Activated T-helper 1 cell treated with anti-CD3 and anti-CD28 coated beads, Interleukin-12 subunit alpha, Interleukin-12 subunit beta, Interleukin-2, Interleukin-4 antibody, amounts not matched to agents 30 ng/mL and 10 ng/mL and 1 ng/mL, durations not matched to agents 14 hours and 24 hours and 36 hours (primary cell): ENCODE measurements at regions of chr7 and their contacts with region 1.

Region 1: DNA sequence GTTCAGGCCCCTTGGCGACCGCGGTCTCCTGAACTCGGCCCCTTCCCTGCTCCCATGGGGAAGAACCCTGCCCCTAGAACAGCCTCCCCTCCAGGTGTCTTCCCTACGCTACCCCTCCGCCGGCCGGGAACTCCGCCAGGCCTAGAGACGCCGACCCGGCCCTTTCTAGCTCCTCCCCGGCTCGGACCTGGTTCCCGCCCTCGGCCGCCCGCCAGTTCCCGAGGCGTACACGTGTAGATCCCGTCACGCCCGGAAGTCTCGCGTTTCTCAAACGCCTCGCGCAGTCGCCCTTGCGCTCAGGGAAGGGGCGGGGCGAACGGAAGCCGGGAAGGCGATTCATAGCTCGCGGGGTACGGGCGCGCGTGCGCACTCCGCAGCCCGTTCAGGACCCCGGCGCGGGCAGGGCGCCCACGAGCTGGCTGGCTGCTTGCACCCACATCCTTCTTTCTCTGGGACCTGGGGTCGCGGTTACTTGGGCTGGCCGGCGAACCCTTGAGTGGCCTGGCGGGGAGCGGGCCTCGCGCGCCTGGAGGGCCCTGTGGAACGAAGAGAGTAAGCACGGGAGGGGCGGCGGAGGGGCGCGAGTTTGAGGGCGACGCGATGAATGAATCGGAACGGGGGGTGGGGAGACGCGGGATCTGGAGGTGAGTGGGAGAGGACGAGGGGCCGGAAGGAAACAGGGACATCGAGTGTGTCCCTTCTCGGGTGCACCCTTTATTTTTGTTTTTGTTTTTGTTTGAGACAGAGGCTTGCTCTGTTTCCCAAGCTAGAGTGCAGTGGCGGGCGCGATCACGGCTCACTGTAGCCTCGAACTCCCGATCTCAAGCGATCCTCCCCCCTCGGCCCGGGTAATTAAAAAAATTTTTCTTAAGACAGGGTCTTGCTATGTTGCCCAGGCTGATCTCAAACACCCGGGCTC is at the start of gene POP7:
- DNase-seq: peak; percentile 99
- H3K4me3 Mint-ChIP-seq: peak within 1 kb of the TSS; percentile 98
- H3K27ac Mint-ChIP-seq: peak within 1 kb of the TSS; percentile 98
- H3K4me1 Mint-ChIP-seq: peaks cover 7% of the 10 kb centered on the region
- H3K27me3 Mint-ChIP-seq: peaks cover 13% of the 10 kb centered on the region
- total RNA-seq, gene POP7: 82.7 and 84.4 TPM in 2 replicates

Region 2: GRCh38 chr7:100632951-100633717 is 72.9 kb before region 1 on chr7:
- intact Hi-C with region 1: loop called (anchors 5 kb)
- DNase-seq: peak; percentile 57
- H3K4me3 Mint-ChIP-seq: peak overlapping the region; percentile 92
- H3K27ac Mint-ChIP-seq: peak overlapping the region; percentile 92
- H3K4me1 Mint-ChIP-seq: peaks cover 21% of the 10 kb centered on the region
- H3K27me3 Mint-ChIP-seq: no peaks in the 10 kb centered on the region

Region 3: DNA sequence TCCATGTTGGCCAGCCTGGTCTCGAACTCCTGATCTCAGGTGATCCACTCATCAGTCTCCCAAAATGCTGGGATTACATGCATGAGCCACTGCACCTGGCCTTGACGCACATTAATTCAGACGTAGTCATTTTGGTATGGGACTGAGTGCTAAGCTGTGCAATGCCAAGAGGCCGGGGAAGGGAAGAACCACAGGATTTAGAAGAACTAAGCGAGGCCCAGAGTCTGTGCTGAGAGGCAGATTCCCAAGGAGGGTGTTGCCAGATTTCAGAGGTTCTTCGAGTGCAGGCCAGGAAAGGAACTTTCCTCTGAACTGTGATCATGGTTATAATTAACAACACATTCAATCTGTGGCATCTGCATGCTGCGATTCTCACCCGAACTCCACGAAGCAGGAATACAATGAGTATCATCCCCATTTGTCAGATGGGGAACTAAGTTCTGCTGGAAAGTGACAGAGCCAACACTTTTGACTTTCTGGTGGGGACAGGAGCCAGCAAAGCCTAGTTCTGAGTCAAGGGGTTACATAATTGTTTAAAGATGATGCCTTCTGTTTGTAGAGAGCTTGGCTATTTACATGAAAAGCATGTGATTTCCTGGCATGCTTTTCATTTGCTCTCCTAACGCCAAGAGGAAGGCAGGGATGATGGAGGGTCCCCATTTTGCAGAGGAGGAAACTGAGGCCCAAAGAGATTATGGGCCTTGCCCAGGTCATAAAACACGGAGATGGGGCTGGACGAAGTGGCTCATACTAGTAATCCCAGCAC is 21.2 kb after region 1 on chr7:
- intact Hi-C with region 1: loop called (anchors 1 kb)
- DNase-seq: no peak
- H3K4me3 Mint-ChIP-seq: no peak overlapping the region
- H3K27ac Mint-ChIP-seq: no peak overlapping the region
- H3K4me1 Mint-ChIP-seq: peaks cover 6% of the 10 kb centered on the region
- H3K27me3 Mint-ChIP-seq: peaks cover 11% of the 10 kb centered on the region

Region 4: DNA sequence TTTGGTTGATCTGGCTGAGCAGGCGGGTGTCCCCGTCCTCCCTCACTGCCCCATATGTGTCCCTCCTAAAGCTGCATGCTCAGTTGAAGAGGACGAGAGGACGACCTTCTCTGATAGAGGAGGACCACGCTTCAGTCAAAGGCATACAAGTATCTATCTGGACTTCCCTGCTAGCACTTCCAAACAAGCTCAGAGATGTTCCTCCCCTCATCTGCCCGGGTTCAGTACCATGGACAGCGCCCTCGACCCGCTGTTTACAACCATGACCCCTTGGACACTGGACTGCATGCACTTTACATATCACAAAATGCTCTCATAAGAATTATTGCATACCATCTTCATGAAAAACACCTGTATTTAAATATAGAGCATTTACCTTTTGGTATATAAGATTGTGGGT is 352.3 kb after region 1 on chr7:
- intact Hi-C with region 1: loop called (anchors 1 kb)
- DNase-seq: peak; percentile 38
- H3K4me3 Mint-ChIP-seq: no peak overlapping the region
- H3K27ac Mint-ChIP-seq: no peak overlapping the region
- H3K4me1 Mint-ChIP-seq: peaks cover 7% of the 10 kb centered on the region
- H3K27me3 Mint-ChIP-seq: peaks cover 24% of the 10 kb centered on the region

Region 5: DNA sequence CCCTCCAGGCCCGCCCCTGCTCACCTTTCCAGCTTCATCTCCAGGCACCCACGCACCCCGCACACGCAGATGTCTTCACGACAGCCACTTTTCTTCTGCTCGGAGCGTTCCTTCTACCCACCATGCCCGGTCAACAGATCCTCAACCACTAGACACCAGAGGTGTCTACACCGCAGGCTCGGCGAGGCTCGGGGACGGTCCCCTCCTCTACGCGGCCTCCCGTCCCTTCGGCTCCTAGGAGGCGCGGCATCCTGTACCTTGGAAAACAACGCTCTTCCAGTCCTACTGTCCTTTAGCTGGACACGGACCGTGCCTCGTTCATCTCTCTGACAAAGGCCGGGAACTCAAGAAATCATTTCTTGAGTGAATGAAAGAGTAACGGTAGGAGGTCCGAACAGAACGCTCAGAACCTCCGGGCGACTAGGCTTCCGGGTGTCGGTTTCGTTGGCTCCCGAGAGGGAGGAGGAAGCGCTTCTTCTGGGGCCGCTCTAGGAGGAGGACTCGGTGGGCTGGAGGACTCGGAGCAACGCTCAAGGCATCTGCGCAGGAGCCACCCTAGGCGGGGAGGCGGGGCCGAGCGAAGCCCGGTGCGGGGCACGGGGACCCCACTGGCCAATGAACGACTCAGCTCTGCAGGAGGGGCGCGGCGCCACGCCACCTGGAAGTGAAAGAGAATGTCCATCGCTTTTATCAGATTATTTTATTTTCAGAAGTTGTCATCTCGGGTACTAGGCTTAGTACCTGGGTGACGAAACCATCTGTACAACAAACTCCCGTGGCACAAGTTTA is 546.1 kb after region 1 on chr7:
- intact Hi-C with region 1: loop called (anchors 5 kb)
- DNase-seq: peak; percentile 98
- H3K4me3 Mint-ChIP-seq: peak overlapping the region; percentile 98
- H3K27ac Mint-ChIP-seq: peak overlapping the region; percentile 98
- H3K4me1 Mint-ChIP-seq: peaks cover 30% of the 10 kb centered on the region
- H3K27me3 Mint-ChIP-seq: peaks cover 5% of the 10 kb centered on the region